ENCODE measurements at regions of chr22 and their contacts with region 1.

Region 1: DNA sequence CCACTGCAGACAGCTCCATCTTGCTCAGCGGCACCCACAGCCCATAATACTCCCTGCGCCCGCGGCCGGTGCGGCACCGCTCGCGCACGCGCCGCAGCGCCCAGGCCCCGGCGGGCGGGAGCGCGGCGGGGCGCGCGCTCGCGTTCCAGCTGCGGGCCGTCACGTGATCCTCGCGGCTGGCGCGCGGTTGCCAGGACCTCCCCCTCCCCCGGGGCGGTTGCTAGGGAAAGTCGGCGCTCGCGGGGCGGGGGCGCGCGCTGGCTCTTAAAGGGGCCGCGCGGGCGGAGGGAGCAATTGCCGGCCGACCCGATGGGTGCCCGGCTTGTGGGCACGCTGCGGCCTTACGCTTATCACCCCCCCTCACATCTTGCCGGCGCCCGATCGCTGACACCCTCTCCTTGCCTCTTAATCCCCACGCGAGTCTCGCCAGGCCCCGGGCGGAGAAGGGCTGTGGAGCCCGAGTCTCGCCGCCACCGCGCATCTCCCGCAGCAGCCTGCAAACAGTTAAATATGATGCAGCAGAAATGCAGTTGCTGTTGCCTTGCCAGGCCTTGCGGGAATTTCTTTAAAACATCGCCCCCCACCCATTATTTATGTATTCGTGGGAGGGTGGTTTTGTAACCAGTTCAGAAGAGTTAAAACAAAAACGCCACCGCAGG is at the start of gene CBX6:
- DNase-seq: peak; percentile 92
- H3K4me3 Mint-ChIP-seq: peak within 1 kb of the TSS; percentile 91
- H3K27ac Mint-ChIP-seq: peak within 1 kb of the TSS; percentile 80
- H3K4me1 Mint-ChIP-seq: peaks cover 36% of the 10 kb centered on the region
- H3K27me3 Mint-ChIP-seq: peaks cover 23% of the 10 kb centered on the region
- total RNA-seq, gene CBX6: 117 and 120 TPM in 2 replicates

Region 2: DNA sequence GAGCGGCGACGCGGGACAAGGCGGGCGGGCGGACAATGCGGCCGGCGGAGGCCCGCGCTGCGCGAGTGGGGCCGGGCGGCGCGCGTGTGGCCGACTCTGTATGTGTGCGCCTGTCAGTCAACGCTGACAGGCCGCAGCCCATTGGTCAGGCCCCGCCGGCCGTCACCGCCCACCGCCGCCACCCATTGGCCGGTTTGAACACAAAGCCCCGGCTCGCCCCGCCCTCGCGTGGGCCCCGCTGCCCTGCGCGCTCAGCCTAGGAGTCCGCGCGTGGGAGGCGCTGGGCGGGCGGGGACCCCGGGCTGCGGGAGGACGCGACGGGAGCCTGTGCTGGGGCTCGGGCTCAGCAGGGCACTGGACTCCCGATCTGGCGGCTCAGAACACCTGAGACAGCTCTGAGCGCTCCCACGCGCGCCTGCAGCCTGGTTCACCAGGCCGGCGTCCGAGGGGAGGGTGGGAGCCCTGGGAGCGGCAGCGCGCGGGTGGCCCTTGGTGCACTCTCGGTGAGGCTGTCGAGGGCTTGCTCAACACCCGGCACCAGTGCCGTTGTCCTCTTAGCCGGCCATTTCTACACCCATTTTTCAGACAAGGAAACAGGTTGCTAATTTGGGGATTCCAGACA is 116.3 kb before region 1 on chr22 and contains the start of gene SUN2:
- intact Hi-C with region 1: loop called (anchors 5 kb)
- DNase-seq: peak; percentile 91
- H3K4me3 Mint-ChIP-seq: peak within 1 kb of the TSS; percentile 96
- H3K27ac Mint-ChIP-seq: peak within 1 kb of the TSS; percentile 95
- H3K4me1 Mint-ChIP-seq: peaks cover 49% of the 10 kb centered on the region
- H3K27me3 Mint-ChIP-seq: no peaks in the 10 kb centered on the region
- total RNA-seq, gene SUN2: 121 and 123 TPM in 2 replicates

Region 3: DNA sequence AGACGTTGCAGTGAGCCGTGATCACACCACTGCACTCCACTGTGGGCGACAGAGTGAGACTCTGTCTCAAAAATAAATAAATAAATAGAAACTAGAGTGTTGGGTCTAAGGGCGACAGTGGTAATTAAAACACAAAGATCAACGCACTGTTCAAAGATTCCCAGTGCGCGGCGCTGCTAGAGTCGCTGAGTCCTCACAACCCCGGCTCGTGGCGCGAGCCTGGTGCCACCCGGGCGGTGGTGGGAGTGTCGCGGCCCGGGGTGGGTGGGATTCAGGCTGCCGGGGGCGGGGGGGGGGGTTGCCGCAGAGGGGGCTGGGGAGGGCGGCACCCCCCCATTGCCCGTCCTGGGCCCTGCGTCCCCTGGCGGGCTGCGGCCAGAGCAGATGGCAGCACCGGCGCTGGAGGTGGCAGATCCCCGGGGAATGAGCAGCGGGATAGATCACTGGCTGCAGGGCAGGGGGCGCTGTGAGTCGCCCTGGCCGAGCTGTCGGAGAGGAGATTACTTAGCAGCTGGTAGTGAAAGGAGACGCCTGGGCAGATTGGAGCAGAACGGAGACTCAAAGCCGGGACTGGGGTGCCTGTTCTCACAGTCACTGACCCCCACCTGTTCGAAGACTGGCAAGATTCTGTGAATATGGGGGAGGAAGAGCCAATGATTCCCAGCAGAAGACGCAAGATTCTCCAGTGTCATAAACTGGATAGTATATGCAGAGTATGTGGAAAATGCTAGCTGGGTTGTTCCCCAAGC is 54.9 kb after region 1 on chr22:
- intact Hi-C with region 1: loop called (anchors 5 kb)
- DNase-seq: peak; percentile 28
- H3K4me3 Mint-ChIP-seq: no peak overlapping the region
- H3K27ac Mint-ChIP-seq: no peak overlapping the region
- H3K4me1 Mint-ChIP-seq: peaks cover 4% of the 10 kb centered on the region
- H3K27me3 Mint-ChIP-seq: peaks cover 38% of the 10 kb centered on the region

Region 4: GRCh38 chr22:38981992-38982927 is 110.0 kb after region 1 on chr22 and contains the start of gene APOBEC3B:
- intact Hi-C with region 1: loop called (anchors 1 kb)
- DNase-seq: peak; percentile 76
- H3K4me3 Mint-ChIP-seq: peak within 1 kb of the TSS; percentile 84
- H3K27ac Mint-ChIP-seq: peak within 1 kb of the TSS; percentile 95
- H3K4me1 Mint-ChIP-seq: peaks cover 41% of the 10 kb centered on the region
- H3K27me3 Mint-ChIP-seq: peaks cover 2% of the 10 kb centered on the region
- total RNA-seq, gene APOBEC3B: 17.0 and 17.2 TPM in 2 replicates

Region 5: GRCh38 chr22:39003165-39003638 is 130.9 kb after region 1 on chr22:
- intact Hi-C with region 1: loop called (anchors 1 kb)
- DNase-seq: peak; percentile 66
- H3K4me3 Mint-ChIP-seq: no peak overlapping the region
- H3K27ac Mint-ChIP-seq: no peak overlapping the region
- H3K4me1 Mint-ChIP-seq: peaks cover 5% of the 10 kb centered on the region
- H3K27me3 Mint-ChIP-seq: peaks cover 10% of the 10 kb centered on the region

Region 6: DNA sequence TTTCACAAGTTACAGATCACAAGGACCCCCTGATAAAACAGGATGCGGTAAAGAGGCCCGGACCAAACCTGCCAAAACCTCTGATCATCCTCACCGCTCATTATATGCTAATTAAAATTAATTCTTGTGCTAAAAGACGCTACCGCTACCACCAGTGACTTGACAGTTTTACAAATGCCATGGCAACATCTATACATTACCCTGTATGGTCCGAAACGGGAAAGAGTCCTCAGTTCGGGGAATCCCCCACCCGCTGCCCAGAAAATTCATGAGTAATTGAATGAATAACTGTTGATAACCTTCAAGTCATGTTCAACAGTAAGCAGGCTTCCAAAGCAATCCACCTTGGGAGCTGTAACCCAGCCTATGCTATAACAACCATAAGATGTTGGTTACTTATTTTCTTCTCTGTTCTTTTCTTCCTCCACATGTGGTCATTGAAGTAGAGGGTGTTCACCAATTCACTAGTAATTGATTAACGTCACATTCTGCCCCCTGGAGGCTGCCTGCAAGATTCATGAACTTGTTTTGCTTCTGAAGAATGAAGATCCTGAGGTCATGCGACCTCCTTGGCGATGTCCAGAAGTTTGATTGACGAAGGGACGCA is 245.4 kb after region 1 on chr22:
- intact Hi-C with region 1: loop called (anchors 2 kb)
- DNase-seq: peak; percentile 58
- H3K4me3 Mint-ChIP-seq: peak overlapping the region; percentile 41
- H3K27ac Mint-ChIP-seq: peak overlapping the region; percentile 90
- H3K4me1 Mint-ChIP-seq: peaks cover 50% of the 10 kb centered on the region
- H3K27me3 Mint-ChIP-seq: no peaks in the 10 kb centered on the region

Region 7: DNA sequence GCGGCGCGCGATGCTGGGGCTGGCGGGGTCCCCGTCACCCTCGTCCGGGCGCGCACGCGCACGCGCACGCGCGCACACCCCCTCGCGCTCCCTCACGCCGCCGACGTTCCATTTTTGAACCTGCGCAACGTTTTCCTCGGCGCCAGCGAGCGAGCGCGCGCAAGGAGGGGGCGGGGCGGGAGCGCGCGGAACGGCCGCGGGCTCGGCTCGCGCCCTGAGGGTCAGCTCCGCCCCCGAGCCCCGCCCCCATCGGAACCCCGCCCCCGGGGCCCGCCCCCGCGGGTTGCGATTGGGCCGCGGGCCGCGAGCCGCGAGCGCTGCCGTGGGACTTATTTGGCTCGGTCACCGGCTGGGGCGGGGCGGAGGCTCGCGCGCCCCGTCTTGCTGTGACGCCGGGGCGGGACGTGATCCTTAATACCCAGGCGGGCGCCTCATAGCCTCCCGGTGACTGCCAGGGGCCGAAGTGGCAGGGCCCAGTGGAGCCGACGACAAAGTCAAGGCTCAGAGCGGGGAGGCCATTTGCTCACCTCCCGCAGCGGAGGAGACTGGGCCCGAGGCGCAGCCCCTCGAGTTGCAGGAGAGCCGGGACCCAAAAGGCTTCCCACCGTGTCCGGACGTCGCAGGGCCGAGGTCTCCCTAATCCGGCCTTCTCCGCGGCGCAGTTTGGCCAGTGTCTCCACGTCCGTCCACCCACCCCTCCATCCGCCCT is 280.4 kb after region 1 on chr22 and contains the start of gene CBX7:
- intact Hi-C with region 1: loop called (anchors 1 kb)
- DNase-seq: peak; percentile 90
- H3K4me3 Mint-ChIP-seq: peak within 1 kb of the TSS; percentile 78
- H3K27ac Mint-ChIP-seq: peak within 1 kb of the TSS; percentile 42
- H3K4me1 Mint-ChIP-seq: peaks cover 17% of the 10 kb centered on the region
- H3K27me3 Mint-ChIP-seq: peaks cover 29% of the 10 kb centered on the region
- total RNA-seq, gene CBX7: 11.6 and 11.8 TPM in 2 replicates